ENCODE measurements at regions of chr20 and their contacts with region 1.

Region 1: DNA sequence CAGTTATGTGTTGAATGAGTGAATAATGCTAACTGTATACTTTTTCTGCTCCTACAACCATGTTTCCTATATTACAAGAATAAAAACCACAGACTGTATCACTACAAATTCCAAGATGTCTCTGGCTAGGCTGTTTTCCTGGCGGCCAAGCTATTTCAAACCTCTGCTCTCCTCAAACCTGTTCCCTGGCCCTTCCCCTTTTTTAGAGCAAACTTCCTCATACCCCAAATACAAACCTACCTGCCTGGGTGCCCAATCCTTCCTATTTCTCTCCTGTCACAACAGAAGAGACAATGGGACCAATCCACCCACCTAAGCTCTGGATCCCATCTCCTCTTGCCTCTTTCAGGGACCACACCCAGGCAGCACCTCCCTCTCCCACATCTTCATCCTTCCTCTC is 7.5 kb downstream of the TOMM34 start:
- DNase-seq: no peak
- ATAC-seq: no peak
- H3K4me3 Mint-ChIP-seq: no peak overlapping the region
- H3K27ac Mint-ChIP-seq: peak overlapping the region; percentile 2
- H3K4me1 Mint-ChIP-seq: peaks cover 18% of the 10 kb centered on the region
- H3K27me3 Mint-ChIP-seq: no peaks in the 10 kb centered on the region

Region 2: GRCh38 chr20:44637522-44638372 is 315.0 kb before region 1 on chr20:
- CTCF ChIA-PET with region 1: no interaction called
- POLR2A ChIA-PET with region 1: no interaction called
- intact Hi-C with region 1: no loop called
- DNase-seq: no peak
- ATAC-seq: no peak
- H3K4me3 Mint-ChIP-seq: no peak overlapping the region
- H3K27ac Mint-ChIP-seq: no peak overlapping the region
- H3K4me1 Mint-ChIP-seq: peaks cover 15% of the 10 kb centered on the region
- H3K27me3 Mint-ChIP-seq: no peaks in the 10 kb centered on the region

Region 3: GRCh38 chr20:44924570-44924969 is 28.2 kb before region 1 on chr20:
- CTCF ChIA-PET with region 1: interaction called, 4 read pairs
- POLR2A ChIA-PET with region 1: no interaction called
- intact Hi-C with region 1: loop called in 1 of 2 experiments (anchors 2 kb)
- DNase-seq: no peak
- ATAC-seq: no peak
- H3K4me3 Mint-ChIP-seq: no peak overlapping the region
- H3K27ac Mint-ChIP-seq: no peak overlapping the region
- H3K4me1 Mint-ChIP-seq: no peaks in the 10 kb centered on the region
- H3K27me3 Mint-ChIP-seq: no peaks in the 10 kb centered on the region

Region 4: DNA sequence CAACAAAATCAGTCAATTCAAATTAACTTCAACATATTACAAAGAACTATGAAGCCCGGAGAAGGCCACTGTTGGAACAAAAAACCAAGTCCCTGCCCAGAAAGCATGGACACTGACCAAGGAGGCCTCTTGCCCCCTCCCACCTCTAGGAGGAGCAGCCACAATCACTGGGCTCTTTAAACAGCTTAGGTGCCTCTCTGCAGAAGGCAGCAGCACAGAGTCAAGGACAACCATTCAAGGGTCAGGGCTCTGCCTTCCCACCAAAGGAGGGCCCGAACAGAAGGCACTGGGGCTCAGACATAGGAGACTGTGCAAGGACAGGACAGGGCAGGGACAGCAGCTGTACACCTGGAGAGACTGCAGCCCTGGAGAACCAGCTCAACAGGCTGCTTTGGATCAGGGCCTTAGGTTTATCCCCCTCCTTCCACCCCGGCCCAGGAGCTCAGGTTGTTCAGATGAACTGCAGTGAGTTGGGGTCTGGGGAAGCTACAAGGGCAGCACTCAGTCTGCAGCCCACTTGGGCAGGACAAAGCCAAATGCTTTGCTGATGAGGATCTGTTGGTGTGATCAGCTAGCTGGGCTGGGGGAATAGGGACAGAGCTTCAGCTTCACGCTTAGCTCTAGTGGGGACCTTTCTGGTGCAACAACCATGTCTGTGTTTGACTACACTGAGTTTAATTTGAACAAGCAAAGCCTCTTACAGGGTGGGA is 10.3 kb before region 1 on chr20:
- CTCF ChIA-PET with region 1: interaction called, 9 read pairs
- POLR2A ChIA-PET with region 1: interaction called, 15 read pairs
- intact Hi-C with region 1: no loop called
- DNase-seq: no peak
- ATAC-seq: no peak
- H3K4me3 Mint-ChIP-seq: no peak overlapping the region
- H3K27ac Mint-ChIP-seq: peak overlapping the region; percentile 0
- H3K4me1 Mint-ChIP-seq: peaks cover 10% of the 10 kb centered on the region
- H3K27me3 Mint-ChIP-seq: no peaks in the 10 kb centered on the region

Region 5: GRCh38 chr20:45104786-45105185 is 152.1 kb after region 1 on chr20:
- CTCF ChIA-PET with region 1: no interaction called
- POLR2A ChIA-PET with region 1: no interaction called
- intact Hi-C with region 1: no loop called
- DNase-seq: no peak
- ATAC-seq: no peak
- H3K4me3 Mint-ChIP-seq: no peak overlapping the region
- H3K27ac Mint-ChIP-seq: no peak overlapping the region
- H3K4me1 Mint-ChIP-seq: peaks cover 7% of the 10 kb centered on the region
- H3K27me3 Mint-ChIP-seq: peaks cover 16% of the 10 kb centered on the region

Region 6: DNA sequence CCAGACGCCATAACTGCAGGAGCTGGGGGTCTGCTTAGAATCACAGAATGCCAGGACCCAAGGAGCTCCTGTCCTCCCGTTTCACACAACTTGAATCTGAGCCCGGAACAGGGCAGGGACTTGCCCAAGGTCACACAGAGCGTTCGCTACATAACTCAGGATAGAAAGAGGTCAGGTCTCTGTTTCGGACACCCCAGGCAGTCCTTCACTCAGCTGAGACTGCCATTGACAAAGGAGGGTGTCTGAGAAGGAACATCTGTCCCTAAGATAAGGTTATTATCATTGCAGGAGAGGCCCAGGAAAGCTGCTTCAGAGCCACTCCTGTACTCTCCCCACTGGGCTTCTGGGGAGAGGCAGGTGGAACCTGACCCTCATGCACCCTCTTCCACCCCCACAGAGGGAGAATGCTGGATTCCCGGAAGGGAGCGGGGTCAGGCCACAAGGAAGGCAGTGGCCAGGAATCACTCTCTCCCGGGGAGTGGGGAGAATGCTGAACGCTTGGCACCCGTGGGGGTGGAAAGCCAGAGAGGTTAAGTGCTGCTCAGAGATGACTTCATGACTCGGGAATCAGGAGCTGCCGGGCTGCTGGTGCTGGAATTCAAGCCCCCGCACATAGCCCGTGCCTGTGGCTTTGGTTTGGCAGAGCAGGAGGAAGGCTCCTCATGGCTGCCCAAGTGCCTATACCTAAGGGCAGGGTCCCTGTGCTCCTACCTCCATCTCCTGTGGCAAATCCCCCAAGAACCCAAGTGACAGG is 384.8 kb after region 1 on chr20:
- CTCF ChIA-PET with region 1: no interaction called
- POLR2A ChIA-PET with region 1: no interaction called
- intact Hi-C with region 1: no loop called
- DNase-seq: no peak
- ATAC-seq: no peak
- H3K4me3 Mint-ChIP-seq: no peak overlapping the region
- H3K27ac Mint-ChIP-seq: no peak overlapping the region
- H3K4me1 Mint-ChIP-seq: no peaks in the 10 kb centered on the region
- H3K27me3 Mint-ChIP-seq: no peaks in the 10 kb centered on the region

Measured in activated CD4-positive, alpha-beta T cell treated with anti-CD3 and anti-CD28 coated beads for 36 hours (primary cell).